Mammary epithelial cell (primary cell): ENCODE measurements at regions of chr11 and their contacts with region 1.

Region 1: GRCh38 chr11:15074206-15075161 is 1.1 kb downstream of the CALCB start:
- DNase-seq: peak; percentile 68
- H3K4me3 ChIP-seq: peak overlapping the region in 2 of 3 experiments; percentile 6 to 26
- H3K27ac ChIP-seq: no peak overlapping the region
- H3K4me1 ChIP-seq: peaks cover 16% of the 10 kb centered on the region
- H3K27me3 ChIP-seq: peaks cover 6% of the 10 kb centered on the region
- CTCF ChIP-seq: peak; percentile 76 to 85

Region 2: DNA sequence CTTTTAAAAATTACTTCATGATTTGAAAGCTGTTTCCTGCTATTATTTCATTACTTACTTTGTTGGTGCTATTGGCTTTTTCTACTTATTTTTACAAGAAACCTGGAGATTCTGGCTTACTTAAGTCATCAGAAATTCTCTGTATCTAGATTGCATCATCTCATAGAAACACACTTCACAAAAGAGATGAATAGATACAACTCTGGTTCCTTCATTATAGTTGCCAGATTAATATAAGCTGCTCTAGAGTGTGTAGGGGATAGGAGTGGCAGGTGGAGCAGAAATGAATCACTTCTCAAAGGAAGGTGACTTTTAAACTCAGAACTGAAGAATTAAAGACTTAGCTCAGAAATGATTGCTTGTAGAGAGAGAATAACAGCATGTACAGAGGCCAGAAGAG is 202.5 kb before region 1 on chr11:
- CTCF ChIA-PET with region 1: no interaction called
- dilution Hi-C with region 1: no loop called
- in situ Hi-C with region 1: no loop called
- intact Hi-C with region 1: no loop called
- DNase-seq: no peak
- H3K4me3 ChIP-seq: no peak overlapping the region
- H3K27ac ChIP-seq: no peak overlapping the region
- H3K4me1 ChIP-seq: no peaks in the 10 kb centered on the region
- H3K27me3 ChIP-seq: no peaks in the 10 kb centered on the region
- CTCF ChIP-seq: no peak

Region 3: DNA sequence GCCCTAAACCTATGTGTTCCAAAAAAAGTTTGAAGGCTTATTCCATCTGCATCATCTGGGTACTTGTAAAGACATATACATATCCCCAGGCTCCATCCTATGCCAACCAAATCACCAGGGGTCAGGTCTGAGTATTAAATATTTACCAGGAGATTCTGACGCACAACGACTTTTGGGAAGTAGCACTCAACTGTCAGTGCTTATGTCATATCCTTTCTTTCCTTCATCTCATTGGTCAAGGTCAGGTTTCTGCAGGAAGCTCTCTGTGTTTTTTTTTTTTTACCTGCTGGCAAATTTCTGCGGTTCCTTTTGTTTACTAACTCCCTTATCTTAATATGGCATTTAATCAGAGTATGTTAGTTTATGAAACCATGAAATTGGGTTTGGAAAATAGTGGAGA is 159.9 kb before region 1 on chr11:
- CTCF ChIA-PET with region 1: interaction called, 3 read pairs
- dilution Hi-C with region 1: no loop called
- in situ Hi-C with region 1: loop called (anchors 10 kb)
- intact Hi-C with region 1: no loop called
- DNase-seq: no peak
- H3K4me3 ChIP-seq: no peak overlapping the region
- H3K27ac ChIP-seq: no peak overlapping the region
- H3K4me1 ChIP-seq: no peaks in the 10 kb centered on the region
- H3K27me3 ChIP-seq: peaks cover 2% of the 10 kb centered on the region
- CTCF ChIP-seq: no peak

Region 4: DNA sequence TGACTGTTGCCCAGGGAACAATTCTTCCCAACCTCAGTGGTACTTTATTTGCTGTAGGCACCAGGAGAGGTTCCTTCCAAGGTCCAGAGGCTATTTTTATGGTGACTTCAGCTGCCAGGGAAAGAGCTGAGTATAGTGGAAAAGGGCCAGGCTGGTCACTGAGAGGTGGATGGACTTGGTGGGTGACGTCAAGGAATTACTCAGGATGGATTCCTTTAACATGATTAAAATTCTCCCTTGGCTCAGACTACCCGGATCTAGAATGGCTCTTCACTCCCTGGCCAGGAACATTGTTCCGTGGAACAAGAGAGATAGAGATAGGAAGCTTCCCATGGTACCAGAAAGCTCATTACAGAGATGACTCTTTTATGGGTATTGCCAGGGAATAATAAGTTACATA is 93.6 kb before region 1 on chr11:
- CTCF ChIA-PET with region 1: no interaction called
- dilution Hi-C with region 1: loop called (anchors 5 kb)
- in situ Hi-C with region 1: loop called in 1 of 2 experiments (anchors 10 kb)
- intact Hi-C with region 1: no loop called
- DNase-seq: peak; percentile 28
- H3K4me3 ChIP-seq: no peak overlapping the region
- H3K27ac ChIP-seq: no peak overlapping the region
- H3K4me1 ChIP-seq: no peaks in the 10 kb centered on the region
- H3K27me3 ChIP-seq: peaks cover 8% of the 10 kb centered on the region
- CTCF ChIP-seq: no peak

Region 5: DNA sequence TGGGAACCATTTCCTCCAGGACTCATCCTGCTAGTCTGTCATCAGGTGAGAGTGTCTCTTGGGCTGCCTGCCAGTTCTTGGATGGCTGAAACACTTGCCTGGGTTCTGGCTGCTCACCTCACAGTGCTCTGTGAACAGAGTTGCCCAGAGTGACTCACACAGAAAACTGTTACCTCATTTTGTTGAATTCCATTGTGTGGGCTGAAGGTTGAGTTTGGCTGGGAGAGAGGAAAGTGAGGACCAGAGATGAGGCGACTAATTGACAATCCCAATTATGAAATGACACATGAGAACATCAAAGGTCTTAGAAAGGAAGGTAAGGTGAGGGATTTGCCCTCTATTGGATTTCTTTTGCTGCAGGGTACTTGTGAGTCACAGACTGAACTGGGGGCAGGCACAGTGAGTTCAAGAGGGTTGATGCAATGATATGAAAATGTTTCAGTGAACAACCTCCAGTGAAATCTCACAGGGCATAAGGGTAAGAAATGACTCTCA is 21.2 kb before region 1 on chr11:
- CTCF ChIA-PET with region 1: no interaction called
- dilution Hi-C with region 1: no loop called
- in situ Hi-C with region 1: no loop called
- intact Hi-C with region 1: loop called (anchors 1 kb)
- DNase-seq: peak; percentile 78
- H3K4me3 ChIP-seq: no peak overlapping the region
- H3K27ac ChIP-seq: peak overlapping the region; percentile 3
- H3K4me1 ChIP-seq: peaks cover 13% of the 10 kb centered on the region
- H3K27me3 ChIP-seq: no peaks in the 10 kb centered on the region
- CTCF ChIP-seq: no peak

Region 6: GRCh38 chr11:15208378-15209222 is 134.1 kb after region 1 on chr11:
- CTCF ChIA-PET with region 1: no interaction called
- dilution Hi-C with region 1: no loop called
- in situ Hi-C with region 1: no loop called
- intact Hi-C with region 1: loop called (anchors 1 kb)
- DNase-seq: peak; percentile 27
- H3K4me3 ChIP-seq: no peak overlapping the region
- H3K27ac ChIP-seq: no peak overlapping the region
- H3K4me1 ChIP-seq: no peaks in the 10 kb centered on the region
- H3K27me3 ChIP-seq: no peaks in the 10 kb centered on the region
- CTCF ChIP-seq: peak; percentile 80 to 94